T-cell (primary cell): ENCODE measurements at regions of chr22 and their contacts with region 1.

Region 1: GRCh38 chr22:42369245-42370041 is 62.8 kb downstream of the NFAM1 start:
- DNase-seq: peak; percentile 59 to 88 (median 72)
- ATAC-seq: peak; percentile 95 to 98 (median 96)
- H3K4me3 ChIP-seq: peak overlapping the region; percentile 66 to 75
- H3K4me3 Mint-ChIP-seq: peak overlapping the region; percentile 81 to 98 (median 88)
- H3K27ac ChIP-seq: no peak overlapping the region
- H3K27ac Mint-ChIP-seq: peak overlapping the region in 1 of 2 donors; percentile 87
- H3K4me1 ChIP-seq: peaks cover 3 to 24% of the 10 kb centered on the region in 2 experiments
- H3K4me1 Mint-ChIP-seq: peaks cover 16% of the 10 kb centered on the region in 3 donors
- H3K27me3 ChIP-seq: peaks cover 4 to 46% of the 10 kb centered on the region in 2 experiments
- H3K27me3 Mint-ChIP-seq: peaks cover 14 to 31% of the 10 kb centered on the region in 2 donors

Region 2: DNA sequence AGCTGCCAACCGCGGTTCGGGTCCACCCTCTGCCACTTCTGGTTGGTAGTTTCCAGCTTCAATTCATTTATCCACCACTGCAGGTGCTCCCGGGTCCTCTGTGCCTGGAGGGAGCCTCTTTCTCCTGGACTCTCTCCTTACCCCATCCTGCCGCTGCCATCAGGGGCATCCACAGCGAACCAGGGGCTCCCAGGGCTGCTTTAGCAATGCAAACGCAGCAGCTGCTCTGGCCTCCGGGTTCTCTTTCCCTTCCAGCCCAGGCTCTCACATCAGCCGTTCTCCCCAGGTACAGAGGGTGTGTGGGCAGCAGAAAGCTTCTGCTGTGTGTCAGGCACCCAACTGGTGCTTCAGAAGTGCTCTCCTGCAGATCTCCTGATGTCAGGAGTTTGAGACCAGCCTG is 34.8 kb after region 1 on chr22:
- CTCF ChIA-PET with region 1: no interaction called
- POLR2A ChIA-PET with region 1: interaction called in 1 of 2 experiments, 10 read pairs
- DNase-seq: no peak
- ATAC-seq: no peak
- H3K4me3 ChIP-seq: no peak overlapping the region
- H3K4me3 Mint-ChIP-seq: no peak overlapping the region
- H3K27ac ChIP-seq: no peak overlapping the region
- H3K27ac Mint-ChIP-seq: no peak overlapping the region
- H3K4me1 ChIP-seq: no peaks in the 10 kb centered on the region
- H3K4me1 Mint-ChIP-seq: no peaks in the 10 kb centered on the region
- H3K27me3 ChIP-seq: peaks cover 0 to 8% of the 10 kb centered on the region in 2 experiments
- H3K27me3 Mint-ChIP-seq: no peaks in the 10 kb centered on the region

Region 3: GRCh38 chr22:42939941-42940653 is 570.7 kb after region 1 on chr22:
- CTCF ChIA-PET with region 1: no interaction called
- POLR2A ChIA-PET with region 1: no interaction called
- DNase-seq: no peak
- ATAC-seq: no peak
- H3K4me3 ChIP-seq: no peak overlapping the region
- H3K4me3 Mint-ChIP-seq: no peak overlapping the region
- H3K27ac ChIP-seq: no peak overlapping the region
- H3K27ac Mint-ChIP-seq: no peak overlapping the region
- H3K4me1 ChIP-seq: peaks cover 4 to 16% of the 10 kb centered on the region in 2 experiments
- H3K4me1 Mint-ChIP-seq: peaks cover 45 to 57% (median 46%) of the 10 kb centered on the region in 3 donors
- H3K27me3 ChIP-seq: no peaks in the 10 kb centered on the region
- H3K27me3 Mint-ChIP-seq: no peaks in the 10 kb centered on the region